BJ (cell line): ENCODE measurements at regions of chr7 and their contacts with region 1.

Region 1: DNA sequence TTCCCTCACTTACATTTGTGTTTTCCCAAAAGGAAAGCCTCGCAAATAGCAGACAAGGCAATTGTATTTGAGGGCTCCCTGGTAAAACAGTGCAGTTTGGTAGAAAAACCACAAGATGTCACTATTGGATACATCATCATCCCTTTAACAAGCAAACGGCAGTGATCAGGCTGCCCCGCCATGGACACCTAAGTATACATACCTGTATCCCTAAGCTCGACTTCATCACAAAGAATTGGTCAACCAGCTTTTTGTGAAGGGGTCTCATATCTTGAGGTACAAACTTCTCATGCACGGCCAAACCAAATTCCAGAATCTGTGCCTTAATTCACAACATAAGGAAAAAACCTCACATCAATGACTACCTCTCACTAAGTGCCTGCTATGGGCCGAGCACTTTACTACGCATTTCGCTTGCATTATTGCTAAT is 179.5 kb upstream of the IMMP2L start:
- DNase-seq: no peak
- H3K4me3 ChIP-seq: no peak overlapping the region
- H3K27me3 ChIP-seq: no peaks in the 10 kb centered on the region
- CTCF ChIP-seq: peak; percentile 70

Region 2: GRCh38 chr7:111752022-111752582 is 10.3 kb after region 1 on chr7:
- CTCF ChIA-PET with region 1: interaction called, 15 read pairs
- POLR2A ChIA-PET with region 1: no interaction called
- DNase-seq: no peak
- H3K4me3 ChIP-seq: no peak overlapping the region
- H3K27me3 ChIP-seq: no peaks in the 10 kb centered on the region; the same call in 1 of the 2 replicates
- CTCF ChIP-seq: peak; percentile 86